ENCODE measurements at regions of chr22 and their contacts with region 1.

Region 1: DNA sequence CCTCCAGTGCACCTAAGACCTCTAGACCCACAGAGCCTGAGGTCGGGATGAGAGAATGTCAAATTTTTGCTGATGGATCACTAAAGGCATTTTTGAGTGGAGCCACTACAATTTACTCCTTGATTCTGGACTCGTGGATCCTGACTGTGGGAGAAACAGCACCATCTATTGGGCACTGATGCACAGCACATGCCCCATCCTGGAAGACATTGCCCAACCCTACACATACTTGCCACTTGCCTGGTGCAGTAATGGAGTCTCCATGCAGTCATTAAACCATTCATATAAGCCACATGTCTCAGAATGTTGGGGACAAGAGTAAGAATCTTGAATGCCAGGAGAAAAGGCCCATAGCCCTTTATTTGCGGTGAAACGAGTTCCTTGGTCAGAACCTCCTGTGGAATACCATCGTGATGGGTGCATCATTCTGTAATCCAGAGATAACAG is 103.9 kb downstream of the GGTLC2 start:
- DNase-seq: peak in 8 of 14 experiments; percentile 8 to 72 (median 40)
- ATAC-seq: peak; percentile 54
- H3K4me3 ChIP-seq: no peak overlapping the region
- H3K4me3 Mint-ChIP-seq: no peak overlapping the region
- H3K27ac ChIP-seq: no peak overlapping the region
- H3K27ac Mint-ChIP-seq: no peak overlapping the region
- H3K4me1 ChIP-seq: peaks cover 19% of the 10 kb centered on the region
- H3K4me1 Mint-ChIP-seq: peaks cover 22% of the 10 kb centered on the region
- H3K27me3 ChIP-seq: peaks cover 0 to 4% of the 10 kb centered on the region in 2 experiments
- H3K27me3 Mint-ChIP-seq: peaks cover 4% of the 10 kb centered on the region
- CTCF ChIP-seq: peak; percentile 63

Region 2: GRCh38 chr22:22770280-22770871 is 22.1 kb after region 1 on chr22:
- CTCF ChIA-PET with region 1: interaction called, 14 read pairs
- POLR2A ChIA-PET with region 1: interaction called, 8 read pairs
- intact Hi-C with region 1: loop called in 1 of 2 experiments (anchors 2 kb)
- DNase-seq: peak in 12 of 14 experiments; percentile 19 to 69 (median 36)
- ATAC-seq: peak; percentile 54
- H3K4me3 ChIP-seq: no peak overlapping the region
- H3K4me3 Mint-ChIP-seq: no peak overlapping the region
- H3K27ac ChIP-seq: no peak overlapping the region
- H3K27ac Mint-ChIP-seq: no peak overlapping the region
- H3K4me1 ChIP-seq: peaks cover 21% of the 10 kb centered on the region
- H3K4me1 Mint-ChIP-seq: no peaks in the 10 kb centered on the region
- H3K27me3 ChIP-seq: no peaks in the 10 kb centered on the region
- H3K27me3 Mint-ChIP-seq: peaks cover 12% of the 10 kb centered on the region
- CTCF ChIP-seq: peak; percentile 75

Measured in CD4-positive, alpha-beta T cell (primary cell).